ENCODE measurements at regions of chr1 and their contacts with region 1.

Region 1: DNA sequence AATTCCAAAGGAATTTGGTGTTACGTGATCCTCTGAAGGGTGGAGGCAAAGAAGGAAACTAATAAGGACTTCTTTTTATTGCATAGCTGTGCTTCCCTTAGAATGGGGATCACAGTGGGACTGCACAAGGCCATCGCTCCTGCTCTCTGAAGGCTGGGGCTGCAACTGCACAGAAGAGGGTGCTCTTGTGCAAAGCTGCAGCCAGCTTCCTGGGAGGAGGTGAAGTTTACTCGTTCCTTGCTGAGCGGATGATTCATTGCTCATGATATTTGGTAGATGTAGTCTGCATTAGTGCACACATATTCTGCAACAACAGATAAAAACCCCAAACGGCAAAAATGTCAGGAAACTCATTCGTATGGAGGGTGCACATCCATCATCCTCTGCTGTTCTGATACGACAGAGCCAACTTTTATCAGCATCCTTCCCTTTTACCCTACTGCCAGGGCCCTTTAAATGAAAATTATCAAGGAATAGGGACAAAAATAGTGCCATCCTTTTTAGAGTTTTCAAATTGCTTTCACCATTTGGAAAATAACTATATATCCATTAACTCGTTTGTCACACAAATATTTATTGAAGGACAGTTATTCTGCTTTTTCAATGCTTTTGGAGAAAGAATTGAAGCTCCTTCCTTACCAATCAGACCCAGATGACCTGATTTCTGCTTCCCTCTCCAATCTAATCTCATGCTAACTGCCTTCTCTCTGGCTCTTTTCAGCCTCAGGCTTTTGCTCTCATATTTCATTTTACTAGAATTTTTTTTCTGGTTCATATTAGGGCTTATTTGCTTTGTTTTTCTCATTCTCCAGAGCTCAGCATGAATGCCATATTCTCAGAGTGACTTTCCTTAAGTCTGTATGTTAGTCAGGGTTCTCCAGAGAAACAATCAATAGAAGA is 263.6 kb downstream of the DUSP10 start:
- DNase-seq: peak; percentile 36
- ATAC-seq: peak; percentile 100
- H3K4me3 ChIP-seq: no peak overlapping the region
- H3K27ac ChIP-seq: no peak overlapping the region
- H3K4me1 ChIP-seq: no peaks in the 10 kb centered on the region
- H3K27me3 ChIP-seq: no peaks in the 10 kb centered on the region; a peak in 1 of 4 replicates
- CTCF ChIP-seq: peak; percentile 76 to 95 (median 87); a peak in 5 of 6 replicates
- EP300 ChIP-seq: no peak
- POLR2A ChIP-seq: no peak
- RAD21 ChIP-seq: peak; percentile 92

Region 2: DNA sequence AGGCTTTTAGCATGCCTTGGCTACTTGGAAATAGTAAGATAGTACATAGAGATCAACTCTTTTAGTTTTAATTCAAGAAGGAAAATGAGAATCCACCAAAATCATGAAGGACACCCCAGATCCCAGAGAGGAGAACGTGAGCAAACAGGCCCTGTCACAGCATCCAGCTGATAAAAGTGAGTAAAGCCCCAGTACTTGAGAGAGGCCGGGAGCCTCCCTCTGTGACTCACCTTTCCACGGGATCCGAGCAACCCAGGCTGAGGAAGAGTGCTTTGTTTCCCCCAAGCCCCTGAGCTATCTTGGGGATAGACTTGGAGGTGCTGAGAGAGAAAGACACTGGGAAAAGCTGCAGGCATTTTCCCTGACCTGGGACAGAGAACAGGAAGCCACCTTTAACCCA is 25.0 kb after region 1 on chr1:
- CTCF ChIA-PET with region 1: no interaction called
- POLR2A ChIA-PET with region 1: no interaction called
- RAD21 ChIA-PET with region 1: no interaction called
- SMC1A ChIA-PET with region 1: no interaction called
- in situ Hi-C with region 1: no loop called
- intact Hi-C with region 1: no loop called
- DNase-seq: no peak
- ATAC-seq: no peak
- H3K4me3 ChIP-seq: no peak overlapping the region
- H3K27ac ChIP-seq: no peak overlapping the region
- H3K4me1 ChIP-seq: no peaks in the 10 kb centered on the region
- H3K27me3 ChIP-seq: no peaks in the 10 kb centered on the region
- CTCF ChIP-seq: no peak
- EP300 ChIP-seq: no peak
- POLR2A ChIP-seq: no peak
- RAD21 ChIP-seq: no peak

Region 3: DNA sequence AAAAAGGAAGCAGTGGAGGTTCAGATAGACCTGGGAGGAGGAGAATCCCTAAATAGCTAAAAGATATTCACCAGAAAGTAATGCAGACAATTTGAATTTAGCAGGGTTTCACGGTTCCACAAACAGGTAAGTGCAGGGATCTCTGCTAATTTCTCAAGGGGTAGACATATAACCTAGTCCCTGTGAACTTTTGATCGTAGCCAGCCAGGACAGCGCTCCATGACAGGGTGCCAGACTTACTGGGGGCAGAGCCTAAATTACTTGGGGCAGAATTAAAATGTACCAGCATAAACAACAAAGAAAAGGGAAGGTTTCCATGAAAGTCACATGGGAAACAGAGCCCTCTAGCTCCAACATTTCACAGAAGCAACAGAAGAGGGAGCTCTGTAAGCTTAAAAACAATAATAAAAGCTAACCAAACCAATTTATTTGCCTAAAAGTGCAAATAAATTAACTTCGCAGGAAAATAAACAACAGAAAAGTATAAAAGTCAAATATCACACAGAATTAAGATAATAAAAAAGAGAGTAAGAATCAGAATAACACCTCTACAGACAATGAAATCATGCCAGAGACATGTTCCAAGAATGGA is 65.3 kb after region 1 on chr1:
- CTCF ChIA-PET with region 1: interaction called, 10 read pairs
- POLR2A ChIA-PET with region 1: no interaction called
- RAD21 ChIA-PET with region 1: interaction called, 9 read pairs
- SMC1A ChIA-PET with region 1: interaction called, 13 read pairs
- in situ Hi-C with region 1: no loop called
- intact Hi-C with region 1: no loop called
- DNase-seq: no peak
- ATAC-seq: peak; percentile 64
- H3K4me3 ChIP-seq: no peak overlapping the region
- H3K27ac ChIP-seq: no peak overlapping the region
- H3K4me1 ChIP-seq: no peaks in the 10 kb centered on the region
- H3K27me3 ChIP-seq: no peaks in the 10 kb centered on the region
- CTCF ChIP-seq: peak; percentile 39 to 57 (median 53); a peak in 5 of 6 replicates
- EP300 ChIP-seq: no peak
- POLR2A ChIP-seq: no peak
- RAD21 ChIP-seq: peak; percentile 66

Region 4: DNA sequence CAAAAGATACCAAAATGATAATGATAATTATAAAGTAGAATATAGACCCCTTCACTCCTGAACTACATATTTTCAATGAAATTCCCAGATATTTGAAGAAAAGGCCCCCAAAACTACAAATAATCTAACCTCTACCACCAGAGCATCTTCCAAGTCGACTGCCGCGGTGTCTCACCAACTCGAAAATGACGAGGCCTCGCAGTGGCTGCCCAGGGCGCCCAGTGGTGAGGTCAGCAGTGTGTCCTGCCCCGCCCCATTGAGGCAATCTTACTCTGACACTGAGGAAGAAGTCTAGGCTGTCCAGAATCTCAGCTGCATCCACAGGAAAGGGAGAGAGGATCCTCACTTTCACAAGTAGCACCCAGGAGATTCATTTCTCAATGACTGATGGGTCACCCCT is 258.4 kb after region 1 on chr1:
- CTCF ChIA-PET with region 1: interaction called, 22 read pairs
- POLR2A ChIA-PET with region 1: no interaction called
- RAD21 ChIA-PET with region 1: interaction called, 14 read pairs
- SMC1A ChIA-PET with region 1: interaction called, 10 read pairs
- in situ Hi-C with region 1: no loop called
- intact Hi-C with region 1: loop called (anchors 2 kb)
- DNase-seq: no peak
- ATAC-seq: peak; percentile 47
- H3K4me3 ChIP-seq: peak overlapping the region; percentile 90
- H3K27ac ChIP-seq: no peak overlapping the region
- H3K4me1 ChIP-seq: peaks cover 11% of the 10 kb centered on the region
- H3K27me3 ChIP-seq: no peaks in the 10 kb centered on the region
- CTCF ChIP-seq: no peak
- EP300 ChIP-seq: no peak
- POLR2A ChIP-seq: 0 out of 2 replicates have a peak, but pooled peaks have one; percentile 25
- RAD21 ChIP-seq: no peak

Region 5: GRCh38 chr1:221829327-221830015 is 351.2 kb after region 1 on chr1:
- CTCF ChIA-PET with region 1: no interaction called
- POLR2A ChIA-PET with region 1: no interaction called
- RAD21 ChIA-PET with region 1: no interaction called
- SMC1A ChIA-PET with region 1: no interaction called
- in situ Hi-C with region 1: no loop called
- intact Hi-C with region 1: loop called (anchors 10 kb)
- DNase-seq: no peak
- ATAC-seq: peak; percentile 82
- H3K4me3 ChIP-seq: no peak overlapping the region
- H3K27ac ChIP-seq: no peak overlapping the region
- H3K4me1 ChIP-seq: peaks cover 8% of the 10 kb centered on the region
- H3K27me3 ChIP-seq: no peaks in the 10 kb centered on the region
- CTCF ChIP-seq: no peak
- EP300 ChIP-seq: no peak
- POLR2A ChIP-seq: no peak
- RAD21 ChIP-seq: no peak

Region 6: DNA sequence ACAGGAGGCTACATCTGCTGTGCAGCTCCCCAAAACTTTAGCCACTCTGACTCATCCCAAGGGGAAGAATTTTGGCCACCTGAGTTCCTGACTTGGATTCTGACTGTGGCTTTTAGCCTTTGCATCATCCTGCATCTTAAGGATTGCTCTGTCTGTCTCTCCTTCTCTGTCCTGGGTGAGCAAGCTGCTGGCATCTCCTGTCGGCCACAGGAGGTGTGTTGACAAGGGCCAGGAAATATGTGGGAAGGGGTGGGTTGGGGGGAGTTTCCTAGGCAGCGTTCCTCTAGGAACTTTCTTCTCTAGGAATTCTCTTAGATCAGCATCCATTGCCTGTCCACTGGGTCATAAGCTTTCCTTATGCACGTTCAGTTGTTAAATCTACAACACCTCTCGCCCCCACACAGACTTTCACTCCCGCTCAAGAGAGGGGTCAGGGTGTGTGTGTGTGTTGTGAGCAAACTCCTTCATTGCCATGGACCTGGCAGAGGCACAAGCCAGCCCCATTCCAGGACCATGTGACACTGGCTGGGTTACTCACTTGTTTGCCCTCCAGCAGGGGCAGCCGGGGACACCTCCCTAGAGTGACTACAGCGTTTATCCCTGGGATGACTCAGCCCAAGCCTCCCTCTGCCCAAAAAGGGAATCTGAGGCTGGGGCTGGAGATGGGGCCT is 408.6 kb after region 1 on chr1:
- CTCF ChIA-PET with region 1: no interaction called
- POLR2A ChIA-PET with region 1: no interaction called
- RAD21 ChIA-PET with region 1: no interaction called
- SMC1A ChIA-PET with region 1: interaction called, 12 read pairs
- in situ Hi-C with region 1: no loop called
- intact Hi-C with region 1: no loop called
- DNase-seq: no peak
- ATAC-seq: no peak
- H3K4me3 ChIP-seq: no peak overlapping the region
- H3K27ac ChIP-seq: no peak overlapping the region
- H3K4me1 ChIP-seq: no peaks in the 10 kb centered on the region; the same call in 1 of the 2 replicates
- H3K27me3 ChIP-seq: no peaks in the 10 kb centered on the region
- CTCF ChIP-seq: no peak
- EP300 ChIP-seq: no peak
- POLR2A ChIP-seq: no peak
- RAD21 ChIP-seq: no peak

Region 7: GRCh38 chr1:222009105-222009730 is 530.9 kb after region 1 on chr1:
- CTCF ChIA-PET with region 1: interaction called, 28 read pairs
- POLR2A ChIA-PET with region 1: no interaction called
- RAD21 ChIA-PET with region 1: interaction called, 5 read pairs
- SMC1A ChIA-PET with region 1: interaction called, 10 read pairs
- in situ Hi-C with region 1: no loop called
- intact Hi-C with region 1: loop called (anchors 5 kb)
- DNase-seq: peak; percentile 36
- ATAC-seq: peak; percentile 95
- H3K4me3 ChIP-seq: no peak overlapping the region
- H3K27ac ChIP-seq: no peak overlapping the region
- H3K4me1 ChIP-seq: no peaks in the 10 kb centered on the region
- H3K27me3 ChIP-seq: no peaks in the 10 kb centered on the region
- CTCF ChIP-seq: peak; percentile 45 to 59 (median 48); a peak in 5 of 6 replicates
- EP300 ChIP-seq: no peak
- POLR2A ChIP-seq: no peak
- RAD21 ChIP-seq: peak; percentile 74

Region 8: DNA sequence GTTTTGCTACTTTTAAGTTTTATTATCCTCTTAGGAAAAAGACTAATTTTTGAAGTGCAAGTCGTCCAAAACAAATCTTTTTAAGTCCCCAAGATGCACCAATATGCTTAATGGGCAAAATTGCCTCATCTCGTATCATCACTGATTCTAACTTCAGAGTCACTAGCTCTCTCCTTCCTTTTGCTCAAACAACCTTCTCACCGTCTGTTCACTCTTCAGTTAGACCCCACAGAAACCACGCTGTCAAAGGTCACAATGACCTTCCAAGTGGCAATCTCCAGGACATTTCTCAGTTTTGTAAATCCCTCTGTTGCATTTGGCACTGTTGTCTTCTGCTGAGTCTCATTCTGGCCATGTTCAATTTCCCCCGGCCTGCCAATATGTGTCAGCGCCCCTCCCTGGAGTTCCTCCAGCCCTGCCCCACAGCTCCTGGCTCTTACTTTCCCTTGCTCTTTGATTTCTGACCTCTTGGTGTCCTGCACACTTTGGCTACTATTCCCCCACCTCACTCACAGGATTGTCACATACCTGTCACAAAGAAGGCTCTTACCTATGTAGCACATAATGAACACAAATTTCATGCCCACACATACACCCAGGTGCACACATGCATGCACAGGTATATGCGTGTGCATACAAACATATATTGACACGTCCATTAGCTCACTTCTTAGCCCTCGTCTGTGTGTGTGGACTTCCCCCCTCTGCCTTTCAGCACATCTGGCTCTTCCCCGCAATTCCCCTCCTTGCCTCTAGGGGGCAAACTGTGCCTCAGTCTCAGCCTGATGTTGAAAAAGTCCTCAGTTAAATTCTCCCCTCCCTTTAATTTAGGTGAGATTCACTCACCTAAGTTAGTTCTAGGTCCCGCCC is 617.5 kb after region 1 on chr1:
- CTCF ChIA-PET with region 1: interaction called, 6 read pairs
- POLR2A ChIA-PET with region 1: no interaction called
- RAD21 ChIA-PET with region 1: interaction called, 3 read pairs
- SMC1A ChIA-PET with region 1: interaction called, 5 read pairs
- in situ Hi-C with region 1: no loop called
- intact Hi-C with region 1: loop called (anchors 5 kb)
- DNase-seq: peak; percentile 25
- ATAC-seq: peak; percentile 95
- H3K4me3 ChIP-seq: no peak overlapping the region
- H3K27ac ChIP-seq: no peak overlapping the region
- H3K4me1 ChIP-seq: no peaks in the 10 kb centered on the region
- H3K27me3 ChIP-seq: no peaks in the 10 kb centered on the region
- CTCF ChIP-seq: peak; percentile 68 to 98 (median 94)
- EP300 ChIP-seq: no peak
- POLR2A ChIP-seq: no peak
- RAD21 ChIP-seq: peak; percentile 67

Measured in GM12878 (cell line).